Panc1 (cell line): ENCODE measurements at regions of chr22 and their contacts with region 1.

Region 1: GRCh38 chr22:31451709-31452571 is 37.7 kb downstream of the EIF4ENIF1 start:
- DNase-seq: peak; percentile 22
- ATAC-seq: peak; percentile 85
- H3K4me3 ChIP-seq: no peak overlapping the region
- H3K27ac ChIP-seq: no peak overlapping the region
- H3K4me1 ChIP-seq: no peaks in the 10 kb centered on the region
- H3K27me3 ChIP-seq: no peaks in the 10 kb centered on the region
- CTCF ChIP-seq: peak; percentile 60

Region 2: GRCh38 chr22:30964858-30965257 is 487.1 kb before region 1 on chr22:
- CTCF ChIA-PET with region 1: no interaction called
- POLR2A ChIA-PET with region 1: no interaction called
- in situ Hi-C with region 1: no loop called
- intact Hi-C with region 1: no loop called
- DNase-seq: no peak
- ATAC-seq: no peak
- H3K4me3 ChIP-seq: no peak overlapping the region
- H3K27ac ChIP-seq: no peak overlapping the region
- H3K4me1 ChIP-seq: peaks cover 9% of the 10 kb centered on the region; the same call in 1 of the 2 replicates
- H3K27me3 ChIP-seq: no peaks in the 10 kb centered on the region
- CTCF ChIP-seq: no peak

Region 3: DNA sequence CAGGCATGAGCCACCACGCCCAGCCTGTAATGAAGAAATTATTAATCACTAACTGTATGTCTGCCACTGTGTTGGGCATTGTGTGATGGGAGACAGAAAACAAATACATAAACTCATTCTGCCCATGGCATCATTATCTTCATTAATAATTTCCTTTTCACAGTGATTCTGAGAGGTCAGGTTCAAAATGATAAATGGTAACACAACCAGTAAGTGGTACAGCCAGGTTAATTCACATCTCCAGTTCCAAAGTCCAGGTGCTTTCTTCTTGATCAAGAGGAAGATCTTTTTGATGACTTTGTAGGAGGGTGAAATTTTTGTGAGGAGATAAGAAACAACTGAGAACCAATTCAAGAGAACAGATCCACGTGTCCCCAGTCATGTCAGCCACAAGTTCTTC is 143.3 kb after region 1 on chr22:
- CTCF ChIA-PET with region 1: no interaction called
- POLR2A ChIA-PET with region 1: no interaction called
- in situ Hi-C with region 1: no loop called
- intact Hi-C with region 1: no loop called
- DNase-seq: no peak
- ATAC-seq: no peak
- H3K4me3 ChIP-seq: no peak overlapping the region
- H3K27ac ChIP-seq: no peak overlapping the region
- H3K4me1 ChIP-seq: no peaks in the 10 kb centered on the region
- H3K27me3 ChIP-seq: no peaks in the 10 kb centered on the region
- CTCF ChIP-seq: no peak

Region 4: GRCh38 chr22:31789803-31790202 is 337.9 kb after region 1 on chr22:
- CTCF ChIA-PET with region 1: interaction called, 10 read pairs
- POLR2A ChIA-PET with region 1: no interaction called
- in situ Hi-C with region 1: no loop called
- intact Hi-C with region 1: no loop called
- DNase-seq: no peak
- ATAC-seq: no peak
- H3K4me3 ChIP-seq: no peak overlapping the region
- H3K27ac ChIP-seq: no peak overlapping the region
- H3K4me1 ChIP-seq: no peaks in the 10 kb centered on the region
- H3K27me3 ChIP-seq: no peaks in the 10 kb centered on the region
- CTCF ChIP-seq: no peak